CD4-positive, alpha-beta T cell (primary cell): ENCODE measurements at regions of chr19 and their contacts with region 1.

Region 1: GRCh38 chr19:40200341-40201099 is 9.3 kb downstream of the MAP3K10 start:
- DNase-seq: no peak
- ATAC-seq: no peak
- H3K4me3 ChIP-seq: no peak overlapping the region
- H3K4me3 Mint-ChIP-seq: no peak overlapping the region
- H3K27ac ChIP-seq: no peak overlapping the region
- H3K27ac Mint-ChIP-seq: no peak overlapping the region
- H3K4me1 ChIP-seq: no peaks in the 10 kb centered on the region
- H3K4me1 Mint-ChIP-seq: peaks cover 6% of the 10 kb centered on the region
- H3K27me3 ChIP-seq: no peaks in the 10 kb centered on the region
- H3K27me3 Mint-ChIP-seq: no peaks in the 10 kb centered on the region
- CTCF ChIP-seq: no peak

Region 2: DNA sequence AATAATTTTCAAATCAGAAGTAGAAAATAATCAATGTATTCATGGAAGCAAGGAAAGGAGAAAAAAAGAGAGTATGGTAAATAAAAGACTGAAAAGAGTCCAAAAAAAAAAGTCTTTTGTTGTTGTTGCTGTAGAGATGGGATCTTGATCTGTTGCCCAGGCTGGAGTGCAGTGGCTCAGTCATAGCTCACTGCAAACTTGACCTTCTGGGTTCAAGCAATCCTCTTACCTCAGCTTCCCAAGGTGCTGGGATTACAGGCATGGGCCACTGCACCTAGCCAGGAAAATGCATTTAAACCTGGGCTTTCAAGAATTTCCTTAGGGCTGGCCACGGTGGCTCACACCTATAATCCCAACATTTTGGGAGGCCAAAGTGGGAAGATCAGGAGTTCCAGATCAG is 16.2 kb before region 1 on chr19:
- CTCF ChIA-PET with region 1: no interaction called
- POLR2A ChIA-PET with region 1: interaction called, 4 read pairs
- intact Hi-C with region 1: loop called in 1 of 2 experiments (anchors 1 kb)
- DNase-seq: no peak
- ATAC-seq: no peak
- H3K4me3 ChIP-seq: no peak overlapping the region
- H3K4me3 Mint-ChIP-seq: no peak overlapping the region
- H3K27ac ChIP-seq: no peak overlapping the region
- H3K27ac Mint-ChIP-seq: no peak overlapping the region
- H3K4me1 ChIP-seq: no peaks in the 10 kb centered on the region
- H3K4me1 Mint-ChIP-seq: no peaks in the 10 kb centered on the region
- H3K27me3 ChIP-seq: no peaks in the 10 kb centered on the region
- H3K27me3 Mint-ChIP-seq: peaks cover 5% of the 10 kb centered on the region
- CTCF ChIP-seq: no peak